Activated B cell treated with CpG ODN at 0.5 μM for 24 hours (primary cell): ENCODE measurements at regions of chr13 and their contacts with region 1.

Region 1: GRCh38 chr13:29472332-29472961 is 123.0 kb downstream of the SLC7A1 start:
- DNase-seq: no peak
- ATAC-seq: peak; percentile 72
- H3K4me3 Mint-ChIP-seq: peak overlapping the region; percentile 24
- H3K27ac Mint-ChIP-seq: no peak overlapping the region
- H3K4me1 Mint-ChIP-seq: peaks cover 7% of the 10 kb centered on the region
- H3K27me3 Mint-ChIP-seq: peaks cover 6% of the 10 kb centered on the region
- CTCF ChIP-seq: peak; percentile 91

Region 2: GRCh38 chr13:29161676-29162075 is 310.8 kb before region 1 on chr13:
- CTCF ChIA-PET with region 1: no interaction called
- POLR2A ChIA-PET with region 1: no interaction called
- intact Hi-C with region 1: no loop called
- DNase-seq: no peak
- ATAC-seq: no peak
- H3K4me3 Mint-ChIP-seq: no peak overlapping the region
- H3K27ac Mint-ChIP-seq: no peak overlapping the region
- H3K4me1 Mint-ChIP-seq: no peaks in the 10 kb centered on the region
- H3K27me3 Mint-ChIP-seq: peaks cover 5% of the 10 kb centered on the region
- CTCF ChIP-seq: no peak

Region 3: DNA sequence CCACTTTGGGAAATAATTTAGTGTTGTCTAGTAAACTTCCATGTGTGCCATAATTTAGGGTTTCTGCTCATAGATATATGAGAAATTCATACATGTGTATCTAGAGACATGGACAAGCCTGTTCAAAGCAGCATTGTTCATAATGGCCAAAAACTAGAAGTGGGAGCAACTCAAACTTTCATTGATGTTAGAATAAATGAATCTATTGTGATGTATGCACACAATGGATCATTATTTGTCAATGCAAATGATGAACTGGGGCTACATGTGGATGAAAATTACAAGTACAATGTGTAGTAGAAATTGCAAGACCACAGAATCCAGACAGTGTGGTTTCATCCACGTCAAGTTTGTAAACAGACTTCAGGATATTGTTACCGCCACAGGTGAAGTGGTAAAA is 161.6 kb before region 1 on chr13:
- CTCF ChIA-PET with region 1: no interaction called
- POLR2A ChIA-PET with region 1: no interaction called
- intact Hi-C with region 1: no loop called
- DNase-seq: no peak
- ATAC-seq: no peak
- H3K4me3 Mint-ChIP-seq: no peak overlapping the region
- H3K27ac Mint-ChIP-seq: no peak overlapping the region
- H3K4me1 Mint-ChIP-seq: no peaks in the 10 kb centered on the region
- H3K27me3 Mint-ChIP-seq: peaks cover 6% of the 10 kb centered on the region
- CTCF ChIP-seq: no peak

Region 4: GRCh38 chr13:29454911-29455481 is 17.5 kb before region 1 on chr13:
- CTCF ChIA-PET with region 1: interaction called, 11 read pairs
- POLR2A ChIA-PET with region 1: no interaction called
- intact Hi-C with region 1: no loop called
- DNase-seq: no peak
- ATAC-seq: peak; percentile 88
- H3K4me3 Mint-ChIP-seq: no peak overlapping the region
- H3K27ac Mint-ChIP-seq: no peak overlapping the region
- H3K4me1 Mint-ChIP-seq: no peaks in the 10 kb centered on the region
- H3K27me3 Mint-ChIP-seq: peaks cover 19% of the 10 kb centered on the region
- CTCF ChIP-seq: no peak

Region 5: DNA sequence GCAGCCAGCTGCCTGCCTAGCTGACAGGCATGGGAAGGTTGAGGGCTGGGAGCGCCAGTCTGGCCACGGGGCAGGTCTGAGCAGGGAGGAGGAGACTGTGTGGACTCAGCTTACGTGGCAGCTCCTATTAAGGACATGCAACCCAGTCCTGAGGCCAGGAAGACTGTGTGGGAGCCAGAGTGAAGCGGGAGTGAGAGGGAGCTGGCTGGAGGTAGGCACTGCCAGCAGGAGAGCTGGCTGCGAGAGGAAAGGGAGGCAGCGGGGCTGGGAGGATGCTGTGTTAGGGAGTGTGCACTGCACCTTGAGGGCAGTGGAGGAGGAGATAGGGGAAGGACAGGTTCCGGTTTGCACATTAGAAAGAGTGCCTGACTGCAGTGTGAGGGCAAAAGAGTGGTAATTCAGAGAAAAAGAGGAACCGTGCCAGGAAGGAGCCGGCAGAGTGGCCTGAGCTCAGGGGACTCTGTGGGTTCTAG is 23.8 kb after region 1 on chr13:
- CTCF ChIA-PET with region 1: interaction called, 4 read pairs
- POLR2A ChIA-PET with region 1: no interaction called
- intact Hi-C with region 1: loop called (anchors 1 kb)
- DNase-seq: peak; percentile 38
- ATAC-seq: peak; percentile 70
- H3K4me3 Mint-ChIP-seq: peak overlapping the region; percentile 71
- H3K27ac Mint-ChIP-seq: peak overlapping the region; percentile 68
- H3K4me1 Mint-ChIP-seq: peaks cover 36% of the 10 kb centered on the region
- H3K27me3 Mint-ChIP-seq: no peaks in the 10 kb centered on the region
- CTCF ChIP-seq: no peak